ENCODE measurements at regions of chr5 and their contacts with region 1.

Region 1: DNA sequence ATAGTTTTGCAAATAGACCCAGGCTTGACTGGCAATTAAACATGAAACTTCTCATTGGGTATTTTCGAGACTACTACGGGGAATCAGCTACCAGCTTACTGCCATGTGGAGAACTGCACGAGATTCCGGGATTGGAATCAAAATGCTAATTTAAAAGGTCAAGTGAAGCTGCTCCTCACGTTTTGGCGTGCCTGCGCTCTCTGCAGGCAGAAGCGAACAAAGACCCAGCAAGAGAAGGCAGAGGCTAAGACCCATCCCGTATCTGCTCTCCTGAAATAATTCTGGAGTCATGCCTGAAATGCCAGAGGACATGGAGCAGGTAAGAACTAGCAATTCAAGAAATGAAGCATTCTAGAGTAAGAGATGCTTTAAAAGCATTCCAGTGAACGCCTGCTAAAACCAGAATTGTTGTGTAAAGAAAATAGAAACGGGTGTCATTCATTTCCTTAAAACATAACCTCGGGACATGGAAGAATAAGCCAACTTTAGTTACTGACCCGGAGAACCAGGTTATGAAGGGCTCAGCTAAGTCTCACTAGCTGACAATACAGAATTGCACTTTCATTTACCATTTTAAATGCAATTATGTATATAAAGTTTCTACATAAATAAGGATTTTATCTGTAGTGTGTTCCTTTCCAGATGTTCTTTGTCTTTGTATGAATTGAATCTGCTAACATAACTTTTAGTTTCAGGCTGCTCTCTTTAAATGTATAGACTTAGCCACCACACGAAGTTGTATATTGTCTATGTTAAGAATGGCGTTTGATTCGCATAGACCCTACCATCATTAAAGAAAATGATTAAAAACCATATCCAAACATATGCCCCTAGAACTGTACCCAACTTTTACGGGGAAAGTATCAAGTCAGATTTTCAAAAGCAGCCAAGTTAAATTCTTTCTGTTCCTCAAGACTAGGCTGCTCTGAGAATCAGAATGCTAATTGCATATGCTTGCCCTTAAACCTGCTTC is 2.0 kb upstream of the MAT2B start:
- DNase-seq: peak; percentile 67 to 68
- ATAC-seq: peak; percentile 40

Region 2: GRCh38 chr5:162068412-162068811 is 1435.0 kb before region 1 on chr5:
- intact Hi-C with region 1: no loop called
- DNase-seq: peak in 1 of 2 donors; percentile 14
- ATAC-seq: no peak

Region 3: DNA sequence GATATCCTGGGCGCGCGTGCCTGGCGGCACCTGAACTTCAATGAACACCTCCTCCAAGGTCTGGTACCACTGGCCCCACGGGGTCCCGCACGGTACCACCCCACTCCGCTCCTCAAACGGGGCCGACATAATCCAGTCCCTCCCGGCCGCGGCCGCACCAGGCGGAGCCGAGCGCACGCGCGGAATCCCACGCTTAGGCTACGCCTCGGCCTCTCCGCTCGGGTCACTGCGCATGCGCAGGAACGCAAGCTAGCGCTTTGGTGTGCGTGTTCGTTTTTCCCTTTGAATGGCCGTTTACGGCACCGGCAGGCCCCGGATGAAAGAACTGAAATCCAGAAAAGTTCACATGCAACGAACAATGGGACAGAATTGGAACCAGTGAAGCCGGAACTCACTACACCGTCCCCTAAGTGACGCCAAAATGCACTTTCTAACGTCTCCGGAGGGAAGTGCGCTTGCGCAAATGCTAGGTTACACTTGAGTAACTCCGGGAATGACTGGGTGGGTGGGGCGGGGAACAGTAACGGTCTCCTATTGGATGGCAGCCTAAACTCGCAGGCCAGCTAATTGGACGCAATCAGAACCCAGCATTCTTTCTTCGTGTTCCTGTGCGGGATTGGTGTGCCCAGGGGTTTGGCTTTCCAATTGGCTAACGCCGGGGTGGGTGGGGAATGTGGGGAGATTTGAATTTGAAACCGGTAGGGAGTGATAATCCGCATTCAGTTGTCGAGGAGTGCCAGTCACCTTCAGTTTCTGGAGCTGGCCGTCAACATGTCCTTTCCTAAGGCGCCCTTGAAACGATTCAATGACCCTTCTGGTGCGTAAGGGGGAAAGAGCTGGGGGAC is 43.2 kb before region 1 on chr5 and contains the starts of genes HMMR and NUDCD2:
- intact Hi-C with region 1: loop called in 1 of 2 experiments (anchors 2 kb)
- DNase-seq: peak; percentile 97 to 98
- ATAC-seq: peak; percentile 87
- total RNA-seq, gene HMMR: 3.0 to 7.4 TPM
- total RNA-seq, gene NUDCD2: 15.9 to 19.1 TPM